AG04449 (cell line): ENCODE measurements at regions of chr17 and their contacts with region 1.

Region 1: GRCh38 chr17:27654654-27655524 is 23.9 kb downstream of the LGALS9 start:
- DNase-seq: no peak
- H3K4me3 ChIP-seq: no peak overlapping the region
- CTCF ChIP-seq: peak; percentile 78

Region 2: GRCh38 chr17:27413792-27414191 is 241.1 kb before region 1 on chr17:
- CTCF ChIA-PET with region 1: no interaction called
- POLR2A ChIA-PET with region 1: no interaction called
- DNase-seq: no peak
- H3K4me3 ChIP-seq: no peak overlapping the region
- CTCF ChIP-seq: no peak

Region 3: DNA sequence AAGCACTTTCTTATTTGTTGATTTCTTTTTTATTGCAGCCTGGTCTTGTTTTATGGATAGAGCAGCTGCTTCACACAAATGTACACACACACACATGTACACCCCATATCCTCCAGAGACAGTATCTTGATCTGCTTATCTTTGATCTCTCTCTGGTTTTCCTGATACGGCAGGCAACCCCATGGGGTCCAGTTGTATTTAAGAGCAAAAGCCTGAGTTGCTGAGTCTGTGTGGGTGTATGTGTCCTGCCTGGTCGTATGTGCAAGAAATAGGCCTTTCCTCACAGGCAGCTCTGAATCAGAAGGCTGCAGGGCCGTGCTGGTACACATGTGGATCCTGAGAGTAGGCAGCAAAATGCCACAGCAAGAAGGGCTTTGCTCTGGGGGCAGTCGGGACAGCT is 38.5 kb before region 1 on chr17:
- CTCF ChIA-PET with region 1: interaction called, 389 read pairs
- POLR2A ChIA-PET with region 1: no interaction called
- DNase-seq: no peak
- H3K4me3 ChIP-seq: no peak overlapping the region
- CTCF ChIP-seq: no peak

Region 4: GRCh38 chr17:27630607-27631410 is 24.1 kb before region 1 on chr17 and contains the start of gene LGALS9:
- CTCF ChIA-PET with region 1: interaction called, 28 read pairs
- POLR2A ChIA-PET with region 1: no interaction called
- DNase-seq: no peak
- H3K4me3 ChIP-seq: no peak within 1 kb of the TSS
- CTCF ChIP-seq: no peak

Region 5: GRCh38 chr17:27665549-27665948 is 10.7 kb after region 1 on chr17:
- CTCF ChIA-PET with region 1: interaction called, 13 read pairs
- POLR2A ChIA-PET with region 1: no interaction called
- DNase-seq: no peak
- H3K4me3 ChIP-seq: no peak overlapping the region
- CTCF ChIP-seq: no peak

Region 6: GRCh38 chr17:27879987-27880608 is 225.2 kb after region 1 on chr17:
- CTCF ChIA-PET with region 1: interaction called, 34 read pairs
- POLR2A ChIA-PET with region 1: no interaction called
- DNase-seq: no peak
- H3K4me3 ChIP-seq: no peak overlapping the region
- CTCF ChIP-seq: peak; percentile 92